ENCODE measurements at regions of chr1 and their contacts with region 1.

Region 1: GRCh38 chr1:216476341-216476740 is 53.1 kb upstream of the USH2A start:
- DNase-seq: no peak

Region 2: GRCh38 chr1:215872658-215873057 is 603.7 kb before region 1 on chr1:
- intact Hi-C with region 1: loop called in 1 of 2 experiments (anchors 5 kb)
- DNase-seq: no peak

Region 3: GRCh38 chr1:216502528-216503162 is 26.3 kb after region 1 on chr1:
- intact Hi-C with region 1: no loop called
- DNase-seq: no peak